K562 (cell line): ENCODE measurements at regions of chr7 and their contacts with region 1.

Region 1: GRCh38 chr7:141533149-141533949 is 17.9 kb upstream of the AGK start:
- DNase-seq: peak; percentile 79 to 83 (median 81)
- ATAC-seq: peak; percentile 96
- H3K4me3 ChIP-seq: no peak overlapping the region
- H3K27ac ChIP-seq: no peak overlapping the region
- H3K4me1 ChIP-seq: no peaks in the 10 kb centered on the region
- H3K27me3 ChIP-seq: peaks cover 10% of the 10 kb centered on the region in 2 experiments
- CTCF ChIP-seq: peak; percentile 90 to 97 (median 97)
- EP300 ChIP-seq: no peak
- POLR2A ChIP-seq: no peak
- RAD21 ChIP-seq: peak; percentile 82 to 91

Region 2: DNA sequence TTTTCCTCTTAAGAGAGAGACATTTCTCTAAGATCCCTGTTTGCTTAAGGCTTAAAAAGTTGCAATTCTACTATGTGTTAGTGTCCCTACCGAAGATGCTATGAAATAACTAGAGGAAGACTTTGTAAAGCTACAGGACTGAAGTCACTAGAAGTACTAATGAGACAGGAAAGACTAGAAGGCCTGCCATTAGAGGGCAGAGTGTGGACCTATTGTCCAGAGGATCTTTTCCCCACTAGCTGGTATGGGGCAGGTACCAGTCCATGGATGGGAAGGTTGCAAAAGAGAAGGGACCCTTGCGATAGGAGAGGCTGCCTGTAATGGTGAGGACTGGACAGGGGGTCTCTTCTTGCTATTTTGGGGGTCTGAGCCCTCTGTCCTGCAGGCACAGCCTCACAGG is 281.4 kb before region 1 on chr7:
- CTCF ChIA-PET with region 1: no interaction called
- POLR2A ChIA-PET with region 1: no interaction called
- in situ Hi-C with region 1: no loop called
- intact Hi-C with region 1: loop called (anchors 5 kb)
- DNase-seq: no peak
- ATAC-seq: peak; percentile 60; the same call in 2 of the 3 replicates
- H3K4me3 ChIP-seq: no peak overlapping the region
- H3K27ac ChIP-seq: no peak overlapping the region
- H3K4me1 ChIP-seq: no peaks in the 10 kb centered on the region
- H3K27me3 ChIP-seq: no peaks in the 10 kb centered on the region; a peak in 1 of 5 replicates
- CTCF ChIP-seq: 0 out of 6 replicates have a peak, but pooled peaks of 1 of the 3 experiments have one; percentile 10
- EP300 ChIP-seq: no peak
- POLR2A ChIP-seq: no peak
- RAD21 ChIP-seq: no peak